MCF 10A (cell line): ENCODE measurements at regions of chrX and their contacts with region 1.

Region 1: GRCh38 chrX:53071604-53072417 is 10.4 kb upstream of the TSPYL2 start:
- DNase-seq: peak; percentile 86
- H3K4me3 Mint-ChIP-seq: peak overlapping the region; percentile 38
- H3K27ac Mint-ChIP-seq: peak overlapping the region; percentile 2
- H3K4me1 Mint-ChIP-seq: peaks cover 13% of the 10 kb centered on the region
- H3K27me3 Mint-ChIP-seq: peaks cover 71% of the 10 kb centered on the region
- CTCF ChIP-seq: peak; percentile 77

Region 2: GRCh38 chrX:53081925-53082772 is 10.3 kb after region 1 on chrX and contains the start of gene TSPYL2:
- CTCF ChIA-PET with region 1: interaction called, 17 read pairs
- POLR2A ChIA-PET with region 1: interaction called, 56 read pairs
- intact Hi-C with region 1: no loop called
- DNase-seq: peak; percentile 91
- H3K4me3 Mint-ChIP-seq: peak within 1 kb of the TSS; percentile 96
- H3K27ac Mint-ChIP-seq: peak within 1 kb of the TSS; percentile 83
- H3K4me1 Mint-ChIP-seq: peaks cover 25% of the 10 kb centered on the region
- H3K27me3 Mint-ChIP-seq: peaks cover 85% of the 10 kb centered on the region
- CTCF ChIP-seq: no peak
- total RNA-seq, gene TSPYL2: 39.3 and 41.6 TPM in 2 replicates

Region 3: GRCh38 chrX:53088136-53088974 is 16.5 kb after region 1 on chrX:
- CTCF ChIA-PET with region 1: interaction called, 34 read pairs
- POLR2A ChIA-PET with region 1: interaction called, 56 read pairs
- intact Hi-C with region 1: loop called (anchors 1 kb)
- DNase-seq: peak; percentile 91
- H3K4me3 Mint-ChIP-seq: peak overlapping the region; percentile 96
- H3K27ac Mint-ChIP-seq: peak overlapping the region; percentile 92
- H3K4me1 Mint-ChIP-seq: peaks cover 44% of the 10 kb centered on the region
- H3K27me3 Mint-ChIP-seq: peaks cover 72% of the 10 kb centered on the region
- CTCF ChIP-seq: no peak

Region 4: DNA sequence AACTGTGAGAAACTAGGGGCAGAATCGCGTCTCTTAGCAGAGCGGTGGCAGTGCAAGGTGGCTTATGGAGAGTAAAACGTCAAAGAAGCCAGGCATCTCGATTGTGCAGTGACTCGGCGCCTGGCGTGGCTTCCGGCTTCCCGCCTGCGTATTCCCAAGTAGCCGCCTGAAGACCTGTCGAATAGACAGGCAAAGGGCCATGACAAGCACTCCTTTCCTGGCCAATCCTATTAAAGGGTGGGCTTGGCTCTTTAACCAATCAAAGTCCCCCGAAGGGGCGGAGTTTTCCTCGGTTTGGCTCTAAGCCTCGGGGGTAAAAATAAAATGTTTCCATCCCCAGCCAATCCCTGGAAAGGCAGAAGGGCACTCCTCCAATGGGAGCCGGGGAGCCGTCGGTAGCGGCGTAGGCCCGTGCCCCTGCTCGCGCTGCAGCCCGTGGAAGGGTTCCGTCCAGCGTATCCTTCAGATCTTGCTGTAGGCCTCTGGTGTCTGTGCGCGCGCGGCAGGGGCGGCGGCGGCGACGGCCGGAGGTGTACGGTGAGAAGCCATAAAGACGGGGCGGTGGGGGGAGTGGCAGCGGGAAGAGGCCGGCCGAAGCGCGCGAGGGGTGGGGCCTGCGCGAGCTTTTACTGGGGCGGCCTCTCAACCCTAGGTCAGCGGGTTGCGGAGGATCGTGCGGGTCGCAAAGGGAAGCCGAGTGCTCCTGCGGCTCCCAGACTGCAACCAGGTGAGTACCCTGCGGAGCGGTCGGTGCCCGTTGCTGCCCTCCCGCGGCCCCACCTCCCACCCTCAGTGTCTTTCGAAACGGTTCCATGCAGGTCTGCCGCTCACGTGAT is 22.2 kb after region 1 on chrX and contains the start of gene KANTR:
- CTCF ChIA-PET with region 1: interaction called, 34 read pairs
- POLR2A ChIA-PET with region 1: interaction called, 56 read pairs
- intact Hi-C with region 1: loop called (anchors 1 kb)
- DNase-seq: peak; percentile 94
- H3K4me3 Mint-ChIP-seq: peak within 1 kb of the TSS; percentile 83
- H3K27ac Mint-ChIP-seq: peak within 1 kb of the TSS; percentile 4
- H3K4me1 Mint-ChIP-seq: peaks cover 7% of the 10 kb centered on the region
- H3K27me3 Mint-ChIP-seq: peaks cover 41% of the 10 kb centered on the region
- CTCF ChIP-seq: no peak
- total RNA-seq, gene KANTR: 3.4 and 6.3 TPM in 2 replicates